Prostate gland (tissue), 2 donors: ENCODE measurements at regions of chr14 and their contacts with region 1.

Region 1: GRCh38 chr14:99899578-99900178 is 106.5 kb downstream of the EML1 start:
- DNase-seq: no peak
- H3K4me3 ChIP-seq: no peak overlapping the region
- H3K27ac ChIP-seq: no peak overlapping the region
- H3K4me1 ChIP-seq: no peaks in the 10 kb centered on the region
- H3K27me3 ChIP-seq: no peaks in the 10 kb centered on the region
- CTCF ChIP-seq: peak; percentile 18 to 34 (median 26)
- POLR2A ChIP-seq: no peak

Region 2: DNA sequence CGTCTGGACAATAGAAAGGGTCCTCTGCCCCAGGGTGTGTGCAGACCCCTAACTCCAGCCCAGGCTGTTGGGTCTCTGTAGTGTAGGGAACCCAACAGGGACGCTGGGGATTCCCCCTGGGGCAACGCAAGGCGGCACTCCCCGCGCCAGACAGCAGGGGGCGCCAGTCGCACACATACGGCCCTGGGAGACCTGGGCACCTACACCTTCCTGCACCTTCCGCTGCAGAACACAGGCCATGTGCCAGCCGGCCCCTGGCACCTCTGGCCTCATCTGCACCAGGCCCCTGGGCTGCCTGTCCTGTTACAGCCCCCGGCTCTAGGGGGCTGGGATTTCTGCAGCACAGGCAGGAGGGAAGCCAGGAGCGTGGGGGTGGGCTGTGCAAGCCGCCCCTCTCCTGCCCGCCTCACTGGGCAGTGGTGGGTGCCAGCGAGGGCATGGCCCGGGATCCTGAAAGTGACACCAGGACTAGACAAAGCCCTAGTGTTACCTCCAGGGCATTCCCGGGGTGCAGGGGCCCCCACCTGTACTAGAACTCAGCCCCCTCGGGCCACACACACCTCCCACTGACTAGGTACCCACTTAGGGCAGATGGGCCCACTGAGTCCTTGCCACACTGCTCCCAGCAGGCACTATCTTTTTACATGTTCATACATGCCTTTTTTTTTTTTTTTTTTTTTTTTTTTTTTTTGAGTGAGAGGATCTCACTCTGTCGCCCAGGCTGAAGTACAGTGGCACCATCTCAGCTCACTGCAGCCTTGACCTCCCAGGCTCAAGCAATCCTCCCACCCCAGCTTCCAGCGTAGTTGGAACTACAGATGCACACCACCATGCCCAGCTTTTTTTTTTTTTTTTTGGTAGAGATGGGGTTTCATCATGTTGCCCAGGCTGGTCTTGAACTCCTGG is 381.0 kb before region 1 on chr14:
- intact Hi-C with region 1: loop called (anchors 10 kb)
- DNase-seq: peak; percentile 73
- H3K4me3 ChIP-seq: no peak overlapping the region
- H3K27ac ChIP-seq: no peak overlapping the region
- H3K4me1 ChIP-seq: peaks cover 10% of the 10 kb centered on the region
- H3K27me3 ChIP-seq: no peaks in the 10 kb centered on the region
- CTCF ChIP-seq: peak; percentile 97 to 98 (median 98)
- POLR2A ChIP-seq: no peak

Region 3: DNA sequence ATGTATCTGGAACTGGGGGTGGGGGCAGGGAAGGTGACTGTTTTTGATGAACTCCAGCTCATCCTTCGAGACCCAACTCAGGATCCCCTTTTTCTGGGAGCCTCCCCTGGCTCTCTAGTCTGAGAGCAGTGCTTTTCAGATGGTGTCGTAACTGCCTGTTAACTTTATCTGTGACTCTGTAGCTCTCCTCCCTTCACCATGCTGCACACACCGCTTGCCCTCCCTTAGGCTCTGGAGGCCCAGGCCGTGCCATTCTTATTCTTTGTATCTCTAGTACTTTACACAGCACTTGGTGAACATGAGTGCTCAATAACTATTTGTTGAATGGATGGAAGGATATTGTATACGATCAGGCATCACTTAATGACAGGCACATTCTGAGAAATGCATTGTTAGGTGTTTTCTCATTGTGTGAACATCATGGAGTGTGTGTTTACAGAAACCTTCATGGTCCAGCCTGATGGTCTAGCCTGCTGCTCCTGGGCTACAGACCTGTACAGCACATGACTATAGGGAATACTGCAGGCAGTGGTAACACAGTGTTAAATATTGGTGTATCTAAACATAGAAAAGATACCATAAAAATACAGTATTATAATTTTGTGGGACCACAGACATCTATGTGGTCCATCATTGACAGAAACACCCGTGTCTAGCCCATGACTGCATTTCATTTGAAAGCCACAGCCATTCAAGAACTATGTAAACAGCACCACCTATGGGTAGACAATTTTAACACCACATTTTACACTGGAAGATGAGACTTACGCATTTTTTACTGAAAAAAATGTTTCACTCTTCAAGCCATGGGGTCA is 14.6 kb before region 1 on chr14:
- intact Hi-C with region 1: no loop called
- DNase-seq: peak; percentile 34
- H3K4me3 ChIP-seq: no peak overlapping the region
- H3K27ac ChIP-seq: no peak overlapping the region
- H3K4me1 ChIP-seq: no peaks in the 10 kb centered on the region
- H3K27me3 ChIP-seq: no peaks in the 10 kb centered on the region
- CTCF ChIP-seq: peak; percentile 48 to 85 (median 76)
- POLR2A ChIP-seq: no peak

Region 4: DNA sequence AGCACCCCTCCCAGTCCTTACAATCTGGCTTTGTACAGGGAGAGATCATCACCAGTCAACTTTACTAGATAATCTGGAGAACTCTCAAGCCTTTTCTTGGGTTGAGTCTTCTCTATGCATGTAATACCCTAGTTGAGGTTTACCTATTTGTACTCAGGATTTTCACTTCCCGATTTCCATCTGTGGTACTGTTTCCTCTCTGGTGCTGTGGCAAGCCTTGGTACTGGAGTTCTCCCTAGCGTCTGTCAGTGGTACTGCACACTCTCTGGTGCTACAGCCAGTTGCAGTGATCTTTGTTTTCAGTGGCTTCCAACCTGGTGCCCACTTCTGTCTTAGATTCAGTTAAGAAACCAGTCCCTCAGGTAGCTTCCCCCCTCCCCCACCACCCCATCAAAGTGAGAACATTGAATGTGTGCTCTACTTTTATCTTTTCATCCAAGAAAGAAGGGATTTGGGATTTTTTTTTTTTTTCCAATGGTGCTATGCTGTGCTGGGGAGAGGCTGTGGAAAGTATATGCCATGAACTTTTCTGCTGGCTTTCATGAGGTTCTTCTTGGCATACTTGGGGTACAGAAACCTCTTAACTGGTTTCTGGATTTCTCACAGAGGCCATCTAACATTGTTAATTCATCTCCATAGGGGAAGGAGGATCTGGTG is 96.2 kb after region 1 on chr14:
- intact Hi-C with region 1: no loop called
- DNase-seq: peak; percentile 41
- H3K4me3 ChIP-seq: no peak overlapping the region
- H3K27ac ChIP-seq: no peak overlapping the region
- H3K4me1 ChIP-seq: no peaks in the 10 kb centered on the region
- H3K27me3 ChIP-seq: no peaks in the 10 kb centered on the region
- CTCF ChIP-seq: peak; percentile 14 to 65 (median 50)
- POLR2A ChIP-seq: no peak